GM13977 (cell line): ENCODE measurements at regions of chr17 and their contacts with region 1.

Region 1: DNA sequence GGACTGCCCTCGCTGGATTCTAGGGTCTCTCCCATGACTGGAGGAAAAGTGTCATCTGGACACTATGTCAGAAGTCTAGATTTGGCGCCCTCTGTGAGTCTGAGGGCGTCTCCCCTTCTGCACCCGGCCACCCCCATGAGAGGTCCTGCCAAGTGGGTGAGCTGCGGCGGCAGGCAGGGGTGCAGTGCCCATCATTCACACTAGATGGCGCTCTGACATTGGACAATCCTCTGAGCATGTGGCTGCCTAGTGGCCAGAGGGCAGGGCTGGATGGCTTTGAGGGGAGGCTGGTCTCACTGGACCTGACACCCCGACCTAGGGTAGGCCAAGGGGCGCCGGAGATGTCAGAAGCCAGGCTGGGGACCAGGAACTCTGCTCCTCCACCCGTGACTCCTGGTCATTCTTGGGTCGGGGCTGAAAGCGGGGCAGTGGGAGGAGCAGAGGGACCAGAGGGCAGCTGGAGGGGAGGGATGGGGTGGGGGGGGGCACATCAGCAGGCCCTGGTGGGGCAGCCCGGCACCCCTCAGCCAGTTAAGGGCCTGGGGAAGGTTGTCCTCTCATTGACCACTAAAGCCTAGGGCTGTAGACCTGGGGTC is 28.0 kb downstream of the MRM1 start:
- DNase-seq: peak; percentile 86
- CTCF ChIP-seq: peak; percentile 99

Region 2: DNA sequence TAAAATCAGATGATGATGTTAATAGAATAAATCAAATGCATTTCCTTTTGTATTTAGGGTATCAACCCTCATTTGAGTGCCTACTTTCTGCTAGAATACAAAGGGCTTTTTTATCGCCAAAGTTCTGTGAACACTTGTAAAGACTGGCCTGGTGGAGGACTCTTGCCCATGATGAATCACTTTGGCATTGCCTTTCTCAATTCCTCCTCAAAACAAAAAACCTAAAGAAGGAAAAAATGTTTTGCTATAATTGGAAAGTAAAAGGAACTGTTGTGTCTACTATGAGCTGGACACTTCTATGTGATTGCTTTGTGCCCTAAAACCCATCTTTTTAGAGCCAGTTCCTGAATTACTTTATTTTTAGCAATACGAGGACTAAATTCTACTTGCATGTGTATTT is 50.7 kb before region 1 on chr17:
- in situ Hi-C with region 1: no loop called
- DNase-seq: no peak
- CTCF ChIP-seq: no peak

Region 3: GRCh38 chr17:36728030-36728991 is 99.0 kb after region 1 on chr17:
- in situ Hi-C with region 1: no loop called
- DNase-seq: no peak
- CTCF ChIP-seq: no peak

Region 4: DNA sequence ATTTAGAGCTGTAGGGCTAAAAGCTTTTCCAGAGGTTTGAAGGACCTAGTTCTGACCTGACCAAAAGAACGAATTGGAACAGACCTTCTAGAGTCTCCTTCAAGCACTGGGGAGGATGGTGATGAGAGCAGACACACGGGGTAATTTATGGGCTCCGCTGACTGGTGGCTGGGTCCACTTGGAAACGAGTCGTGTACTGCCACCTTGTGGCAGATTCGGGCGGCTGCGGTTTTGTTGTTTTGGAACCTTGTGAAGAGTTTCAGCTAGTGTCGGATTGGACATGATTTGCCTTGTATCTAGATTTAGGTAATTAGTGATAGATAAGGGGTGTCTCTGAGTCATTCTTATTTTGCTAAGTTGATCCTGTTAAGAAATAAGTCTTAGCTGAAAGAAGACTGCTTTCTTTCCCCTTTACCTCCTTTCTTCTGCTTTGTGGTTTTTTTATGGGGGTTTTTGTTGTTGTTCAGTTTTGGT is 418.3 kb after region 1 on chr17:
- in situ Hi-C with region 1: loop called (anchors 25 kb)
- DNase-seq: peak; percentile 78
- CTCF ChIP-seq: peak; percentile 81

Region 5: DNA sequence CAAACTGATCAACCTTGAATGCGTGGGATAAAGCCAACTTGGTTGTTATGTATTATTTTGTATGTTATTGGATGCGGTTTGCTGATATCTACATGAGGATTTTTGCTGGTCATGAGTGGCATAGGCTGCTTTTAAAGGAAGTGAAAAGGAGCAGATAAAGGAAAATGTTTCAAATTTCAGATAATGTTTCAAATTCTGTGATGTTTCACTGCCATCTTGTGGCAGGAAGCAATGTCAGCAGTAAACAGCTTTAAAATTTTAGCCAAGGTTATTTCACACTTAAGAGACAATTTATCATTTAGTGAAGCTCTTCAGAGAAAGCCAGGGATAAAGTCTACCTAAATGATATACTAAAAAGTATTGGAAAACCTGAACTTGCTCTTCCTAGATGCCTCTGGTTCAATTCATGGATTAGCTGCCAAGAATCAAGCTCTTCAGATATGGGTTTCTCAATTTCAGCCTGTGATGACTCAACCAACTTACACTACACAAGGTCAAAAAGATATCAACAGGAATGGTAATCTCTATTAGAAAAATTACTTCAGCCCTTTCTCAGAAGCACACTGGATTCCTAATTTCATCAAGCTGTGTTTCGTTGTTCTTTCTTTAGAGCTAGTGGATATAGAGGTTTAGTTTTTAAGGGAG is 610.5 kb after region 1 on chr17:
- in situ Hi-C with region 1: loop called (anchors 25 kb)
- DNase-seq: peak; percentile 26
- CTCF ChIP-seq: peak; percentile 64